ENCODE measurements at regions of chr2 and their contacts with region 1.

Region 1: DNA sequence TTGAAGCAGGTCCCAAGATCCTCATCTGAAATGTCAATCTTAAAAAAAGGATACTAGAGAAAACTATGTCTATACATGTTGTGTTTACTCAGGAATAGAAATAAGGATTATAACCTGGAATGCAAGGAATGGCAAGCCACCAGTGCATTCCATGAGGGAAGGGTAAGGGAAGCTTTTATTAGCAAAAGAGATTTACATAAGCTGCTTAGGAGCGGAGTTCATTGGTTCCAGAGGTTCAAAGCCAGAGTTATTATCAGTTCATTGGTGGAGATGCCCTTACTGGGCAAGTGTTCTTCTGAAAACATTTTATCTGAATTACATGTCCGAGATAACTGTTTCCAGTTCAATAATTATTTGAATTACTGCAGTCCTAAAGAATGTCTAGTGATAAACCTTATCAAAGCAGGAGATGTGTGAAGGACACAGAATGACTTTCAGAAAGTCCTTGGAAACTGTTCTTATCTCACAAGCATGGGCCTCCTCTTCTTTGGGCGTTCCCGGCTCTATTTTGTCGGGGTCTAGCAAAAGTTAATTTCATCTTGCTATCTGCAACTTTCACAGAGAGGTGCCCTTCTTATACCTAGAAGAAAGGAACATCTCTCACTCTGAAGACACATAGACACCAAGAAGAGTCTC is 23.5 kb downstream of the COMMD1 start:
- DNase-seq: no peak
- ATAC-seq: no peak

Region 2: DNA sequence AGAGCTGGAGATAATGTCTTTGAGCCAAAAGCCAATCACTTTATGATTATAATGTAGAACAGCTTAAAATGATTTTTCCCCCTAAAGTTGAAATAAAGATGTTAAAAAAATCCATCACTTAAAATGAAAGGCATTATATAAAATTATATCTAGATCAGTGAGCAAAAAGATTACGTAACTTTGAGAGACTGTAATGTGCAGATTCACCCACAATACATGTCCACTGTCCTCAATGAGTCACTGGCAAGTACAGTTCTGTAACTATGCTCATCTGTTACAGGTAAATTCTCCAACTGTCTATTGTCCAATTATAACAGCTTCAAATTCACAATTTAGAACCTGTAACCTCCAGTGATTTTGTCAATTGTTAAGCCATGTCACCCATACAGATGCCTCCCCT is 94.1 kb before region 1 on chr2:
- intact Hi-C with region 1: no loop called
- DNase-seq: no peak
- ATAC-seq: no peak

Region 3: DNA sequence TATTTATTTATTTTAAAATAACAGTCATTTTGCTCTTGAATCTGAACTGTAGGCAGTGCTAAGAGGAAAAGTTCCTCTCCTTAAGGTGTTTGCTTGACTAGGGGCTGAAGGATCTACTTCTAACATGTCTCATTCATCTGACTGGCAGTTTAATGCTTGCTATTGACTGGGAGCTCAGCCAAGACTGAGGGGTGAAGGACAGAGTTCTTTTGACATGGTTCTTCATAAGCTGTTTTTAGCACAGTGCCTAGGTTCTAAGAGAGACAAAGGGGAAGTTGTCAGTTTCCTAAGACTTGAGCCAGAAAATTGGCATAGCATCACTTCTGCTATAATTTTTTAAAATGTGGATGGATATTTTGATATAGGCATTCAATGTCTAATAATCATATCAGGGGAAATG is 49.6 kb after region 1 on chr2:
- intact Hi-C with region 1: loop called (anchors 10 kb)
- DNase-seq: no peak
- ATAC-seq: peak; percentile 91

Measured in Right ventricle myocardium inferior (tissue), 1 donor.